ENCODE measurements at regions of chr2 and their contacts with region 1.

Region 1: GRCh38 chr2:197130318-197130717 is 180.3 kb downstream of the ANKRD44 start:
- DNase-seq: peak; percentile 75
- ATAC-seq: peak; percentile 70
- H3K4me3 ChIP-seq: peak overlapping the region in 3 of 5 experiments; percentile 14 to 52 (median 21)
- H3K4me3 Mint-ChIP-seq: peak overlapping the region; percentile 84
- H3K27ac ChIP-seq: peak overlapping the region; percentile 81 to 82
- H3K27ac Mint-ChIP-seq: peak overlapping the region; percentile 96
- H3K4me1 ChIP-seq: peaks cover 66 to 69% of the 10 kb centered on the region in 2 donors
- H3K4me1 Mint-ChIP-seq: peaks cover 69% of the 10 kb centered on the region
- H3K27me3 ChIP-seq: no peaks in the 10 kb centered on the region
- H3K27me3 Mint-ChIP-seq: no peaks in the 10 kb centered on the region
- CTCF ChIP-seq: no peak

Region 2: DNA sequence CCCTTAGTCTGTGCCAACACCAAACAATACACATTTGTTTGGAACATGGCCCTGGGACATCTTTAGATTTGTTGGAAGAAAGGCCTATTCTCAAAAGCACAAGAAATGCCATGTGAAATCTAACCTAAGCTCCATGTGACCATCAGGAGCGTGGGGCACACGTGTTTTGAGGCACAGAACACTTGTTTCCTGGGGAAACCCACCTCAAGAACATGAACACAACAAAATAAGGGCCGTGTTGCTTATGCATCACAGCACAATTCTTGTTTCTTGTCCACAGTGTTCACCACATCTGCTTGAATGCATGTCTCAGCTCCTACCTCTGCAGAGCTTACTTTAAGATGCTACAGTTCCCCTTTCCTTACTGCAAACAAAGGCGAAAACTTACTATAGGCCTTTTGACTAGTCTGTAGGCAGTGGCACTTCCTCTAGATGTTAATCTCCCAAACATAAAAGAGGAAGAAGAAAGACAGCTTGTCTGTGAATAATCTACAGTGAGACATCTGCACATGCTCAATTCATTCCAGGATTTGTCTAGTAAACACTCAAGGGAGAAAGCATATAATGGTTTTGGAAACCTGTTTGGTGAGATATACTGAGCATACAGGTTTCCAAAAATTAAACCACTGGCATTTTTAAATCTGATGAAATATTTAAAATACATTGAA is 15.3 kb after region 1 on chr2:
- CTCF ChIA-PET with region 1: interaction called, 12 read pairs
- POLR2A ChIA-PET with region 1: interaction called, 6 read pairs
- intact Hi-C with region 1: loop called (anchors 1 kb)
- DNase-seq: peak; percentile 93
- ATAC-seq: peak; percentile 88
- H3K4me3 ChIP-seq: no peak overlapping the region
- H3K4me3 Mint-ChIP-seq: peak overlapping the region; percentile 76
- H3K27ac ChIP-seq: peak overlapping the region; percentile 93 to 98
- H3K27ac Mint-ChIP-seq: peak overlapping the region; percentile 99
- H3K4me1 ChIP-seq: peaks cover 87 to 88% of the 10 kb centered on the region in 2 donors
- H3K4me1 Mint-ChIP-seq: peaks cover 82% of the 10 kb centered on the region
- H3K27me3 ChIP-seq: no peaks in the 10 kb centered on the region
- H3K27me3 Mint-ChIP-seq: no peaks in the 10 kb centered on the region
- CTCF ChIP-seq: no peak